Dorsolateral prefrontal cortex (tissue), 120 donors: ENCODE measurements at regions of chr1 and their contacts with region 1.

Region 1: GRCh38 chr1:207628776-207629175 is 16.2 kb upstream of the CR1L start:
- DNase-seq: no peak
- H3K4me3 ChIP-seq: no peak overlapping the region
- H3K27ac ChIP-seq: peak overlapping the region in 3 of 59 donors; percentile 6 to 42 (median 10)
- H3K27me3 ChIP-seq: no peaks in the 10 kb centered on the region
- CTCF ChIP-seq: no peak

Region 2: GRCh38 chr1:207644166-207644851 is 15.5 kb after region 1 on chr1:
- intact Hi-C with region 1: loop called in 1 of 2 experiments (anchors 1 kb)
- DNase-seq: no peak
- H3K4me3 ChIP-seq: peak overlapping the region; percentile 33 to 86 (median 70)
- H3K27ac ChIP-seq: no peak overlapping the region
- H3K27me3 ChIP-seq: peaks cover 0 to 11% (median 0%) of the 10 kb centered on the region in 45 donors
- CTCF ChIP-seq: no peak